ENCODE measurements at regions of chr3 and their contacts with region 1.

Region 1: DNA sequence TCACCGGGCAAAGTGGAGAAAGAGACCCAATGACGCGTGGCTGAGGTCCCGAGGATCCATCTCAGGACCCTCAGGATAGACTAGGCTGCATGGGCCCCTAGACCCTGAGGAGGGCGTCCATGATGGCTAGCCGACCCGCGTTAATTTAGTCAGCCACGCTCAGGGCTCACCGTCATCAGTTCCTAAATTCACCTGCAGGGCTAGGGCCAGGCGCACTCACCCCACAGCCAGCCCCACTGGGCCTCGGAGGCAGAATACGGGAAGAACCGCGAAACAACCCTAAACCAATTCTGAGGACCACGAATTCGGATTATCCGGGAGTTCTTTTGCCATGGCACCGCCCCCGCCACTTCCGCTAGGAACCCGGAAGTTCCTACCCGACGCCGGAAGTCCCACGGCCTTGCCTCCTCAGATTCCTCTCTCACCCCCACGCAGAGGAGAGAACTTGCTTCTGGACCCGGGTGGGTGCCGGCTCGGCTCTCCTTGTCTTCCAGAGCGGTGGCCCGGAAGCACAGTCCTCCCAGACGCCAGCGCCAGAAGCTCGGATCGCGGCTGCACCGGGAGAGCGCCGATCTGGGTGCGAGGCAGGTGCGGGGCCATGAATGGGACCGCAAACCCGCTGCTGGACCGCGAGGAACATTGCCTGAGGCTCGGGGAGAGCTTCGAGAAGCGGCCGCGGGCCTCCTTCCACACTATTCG is at the starts of genes EAF1 and METTL6:
- DNase-seq: peak; percentile 64 to 90 (median 86)
- ATAC-seq: peak; percentile 82
- H3K4me3 ChIP-seq: peak within 1 kb of the TSS; percentile 87 to 96
- H3K4me3 Mint-ChIP-seq: peak within 1 kb of the TSS; percentile 99
- H3K27ac ChIP-seq: peak within 1 kb of the TSS; percentile 81
- H3K27ac Mint-ChIP-seq: peak within 1 kb of the TSS; percentile 98
- H3K4me1 ChIP-seq: peaks cover 43% of the 10 kb centered on the region
- H3K4me1 Mint-ChIP-seq: peaks cover 66% of the 10 kb centered on the region
- H3K27me3 ChIP-seq: no peaks in the 10 kb centered on the region
- H3K27me3 Mint-ChIP-seq: no peaks in the 10 kb centered on the region
- CTCF ChIP-seq: peak; percentile 24
- total RNA-seq, gene EAF1: 33.7 to 36.0 TPM
- total RNA-seq, gene METTL6: 4.1 to 4.9 TPM

Region 2: GRCh38 chr3:14124615-14125190 is 1302.6 kb before region 1 on chr3 and contains the starts of genes CHCHD4 and TMEM43:
- CTCF ChIA-PET with region 1: no interaction called
- POLR2A ChIA-PET with region 1: no interaction called
- intact Hi-C with region 1: loop called in 1 of 2 experiments (anchors 10 kb)
- DNase-seq: peak; percentile 95 to 100 (median 98)
- ATAC-seq: peak; percentile 87
- H3K4me3 ChIP-seq: peak within 1 kb of the TSS; percentile 95 to 100
- H3K4me3 Mint-ChIP-seq: peak within 1 kb of the TSS; percentile 96
- H3K27ac ChIP-seq: peak within 1 kb of the TSS; percentile 89 to 92
- H3K27ac Mint-ChIP-seq: peak within 1 kb of the TSS; percentile 93
- H3K4me1 ChIP-seq: peaks cover 30% of the 10 kb centered on the region
- H3K4me1 Mint-ChIP-seq: peaks cover 56% of the 10 kb centered on the region
- H3K27me3 ChIP-seq: no peaks in the 10 kb centered on the region
- H3K27me3 Mint-ChIP-seq: no peaks in the 10 kb centered on the region
- CTCF ChIP-seq: no peak
- total RNA-seq, gene CHCHD4: 0.71 to 1.7 TPM
- total RNA-seq, gene TMEM43: 20.1 to 24.3 TPM

Region 3: GRCh38 chr3:15098503-15099363 is 328.6 kb before region 1 on chr3 and contains the start of gene RBSN:
- CTCF ChIA-PET with region 1: no interaction called
- POLR2A ChIA-PET with region 1: no interaction called
- intact Hi-C with region 1: loop called in 1 of 2 experiments (anchors 5 kb)
- DNase-seq: peak; percentile 87 to 98 (median 94)
- ATAC-seq: peak; percentile 76
- H3K4me3 ChIP-seq: peak within 1 kb of the TSS; percentile 71 to 76
- H3K4me3 Mint-ChIP-seq: peak within 1 kb of the TSS; percentile 88
- H3K27ac ChIP-seq: peak within 1 kb of the TSS; percentile 96 to 98
- H3K27ac Mint-ChIP-seq: peak within 1 kb of the TSS; percentile 95
- H3K4me1 ChIP-seq: peaks cover 16% of the 10 kb centered on the region
- H3K4me1 Mint-ChIP-seq: peaks cover 31% of the 10 kb centered on the region
- H3K27me3 ChIP-seq: no peaks in the 10 kb centered on the region
- H3K27me3 Mint-ChIP-seq: no peaks in the 10 kb centered on the region
- CTCF ChIP-seq: no peak
- total RNA-seq, gene RBSN: 41.9 to 48.1 TPM

Region 4: DNA sequence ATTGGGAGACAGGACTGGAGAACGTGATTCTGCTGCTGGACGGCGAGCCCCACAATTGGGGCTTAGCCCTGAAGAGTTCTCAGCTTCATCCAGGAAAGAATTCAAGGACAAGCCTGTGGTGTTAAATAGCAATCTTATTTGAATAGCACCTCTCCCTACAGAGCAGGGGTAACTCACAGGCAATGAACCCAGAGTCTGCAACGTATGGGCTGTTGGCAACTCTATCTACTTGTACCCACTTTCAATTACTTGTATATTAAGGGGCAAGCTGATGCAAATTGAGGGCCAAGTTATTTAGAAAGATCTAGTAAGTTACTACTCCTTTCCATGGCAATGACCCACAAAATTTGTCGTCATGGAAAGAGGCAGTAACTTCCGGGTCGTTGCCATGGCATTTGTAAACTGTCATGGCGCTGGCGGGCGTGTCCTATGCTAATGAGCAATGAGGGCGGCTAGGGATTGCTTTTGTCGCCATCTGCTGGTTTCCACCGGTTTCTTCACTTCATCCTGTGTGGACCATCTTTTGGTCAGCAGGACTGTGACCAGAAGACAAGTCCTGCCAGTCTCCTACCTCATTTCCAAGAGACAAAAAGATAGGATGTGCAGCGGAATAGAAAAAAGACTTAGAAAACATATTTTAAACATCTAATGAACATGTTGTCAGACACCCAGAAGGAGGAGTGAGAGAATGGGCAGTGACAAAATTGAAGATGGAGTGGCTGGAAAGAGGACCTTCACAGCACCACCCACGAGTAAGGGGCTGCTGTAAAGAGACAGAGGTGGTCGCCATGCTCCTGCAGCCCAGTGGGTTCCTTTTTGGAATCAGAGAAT is 49.2 kb before region 1 on chr3:
- CTCF ChIA-PET with region 1: no interaction called
- POLR2A ChIA-PET with region 1: no interaction called
- intact Hi-C with region 1: loop called (anchors 1 to 2 kb)
- DNase-seq: peak; percentile 88 to 97 (median 93)
- ATAC-seq: peak; percentile 97
- H3K4me3 ChIP-seq: no peak overlapping the region
- H3K4me3 Mint-ChIP-seq: no peak overlapping the region
- H3K27ac ChIP-seq: peak overlapping the region; percentile 55 to 90
- H3K27ac Mint-ChIP-seq: peak overlapping the region; percentile 89
- H3K4me1 ChIP-seq: peaks cover 5% of the 10 kb centered on the region
- H3K4me1 Mint-ChIP-seq: peaks cover 8% of the 10 kb centered on the region
- H3K27me3 ChIP-seq: no peaks in the 10 kb centered on the region
- H3K27me3 Mint-ChIP-seq: no peaks in the 10 kb centered on the region
- CTCF ChIP-seq: peak; percentile 85

Region 5: DNA sequence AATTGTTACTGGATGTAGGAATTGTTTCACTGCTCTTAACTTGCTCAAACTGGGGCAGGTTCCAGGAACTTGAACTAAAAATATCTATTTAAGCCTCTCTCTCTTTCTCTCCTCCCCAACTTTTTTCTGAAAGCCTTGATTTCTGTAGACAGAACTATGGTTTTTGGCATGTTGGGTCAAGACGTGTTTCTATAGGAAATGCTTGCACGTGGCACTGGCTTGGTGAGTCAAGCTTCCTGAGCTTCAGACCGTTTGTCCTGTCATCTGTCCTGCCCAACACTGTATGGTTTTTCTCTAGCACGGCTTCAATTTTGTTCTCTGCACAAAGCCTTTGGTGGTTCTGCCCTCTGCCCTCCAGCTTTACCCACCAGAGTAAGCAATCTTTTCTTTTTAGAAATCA is 13.6 kb after region 1 on chr3:
- CTCF ChIA-PET with region 1: no interaction called
- POLR2A ChIA-PET with region 1: no interaction called
- intact Hi-C with region 1: no loop called
- DNase-seq: no peak
- ATAC-seq: no peak
- H3K4me3 ChIP-seq: no peak overlapping the region
- H3K4me3 Mint-ChIP-seq: no peak overlapping the region
- H3K27ac ChIP-seq: no peak overlapping the region
- H3K27ac Mint-ChIP-seq: peak overlapping the region; percentile 32
- H3K4me1 ChIP-seq: no peaks in the 10 kb centered on the region
- H3K4me1 Mint-ChIP-seq: peaks cover 9% of the 10 kb centered on the region
- H3K27me3 ChIP-seq: no peaks in the 10 kb centered on the region
- H3K27me3 Mint-ChIP-seq: no peaks in the 10 kb centered on the region
- CTCF ChIP-seq: no peak

Region 6: GRCh38 chr3:15557511-15557946 is 130.2 kb after region 1 on chr3:
- CTCF ChIA-PET with region 1: interaction called, 5 read pairs
- POLR2A ChIA-PET with region 1: no interaction called
- intact Hi-C with region 1: loop called (anchors 1 kb)
- DNase-seq: peak in 7 of 9 experiments; percentile 8 to 80 (median 43)
- ATAC-seq: peak; percentile 99
- H3K4me3 ChIP-seq: no peak overlapping the region
- H3K4me3 Mint-ChIP-seq: no peak overlapping the region
- H3K27ac ChIP-seq: no peak overlapping the region
- H3K27ac Mint-ChIP-seq: no peak overlapping the region
- H3K4me1 ChIP-seq: peaks cover 3% of the 10 kb centered on the region
- H3K4me1 Mint-ChIP-seq: peaks cover 16% of the 10 kb centered on the region
- H3K27me3 ChIP-seq: no peaks in the 10 kb centered on the region
- H3K27me3 Mint-ChIP-seq: no peaks in the 10 kb centered on the region
- CTCF ChIP-seq: peak; percentile 76

Region 7: GRCh38 chr3:15595955-15596354 is 168.6 kb after region 1 on chr3:
- CTCF ChIA-PET with region 1: no interaction called
- POLR2A ChIA-PET with region 1: no interaction called
- intact Hi-C with region 1: loop called (anchors 1 to 5 kb)
- DNase-seq: no peak
- ATAC-seq: no peak
- H3K4me3 ChIP-seq: no peak overlapping the region
- H3K4me3 Mint-ChIP-seq: no peak overlapping the region
- H3K27ac ChIP-seq: no peak overlapping the region
- H3K27ac Mint-ChIP-seq: no peak overlapping the region
- H3K4me1 ChIP-seq: peaks cover 13% of the 10 kb centered on the region
- H3K4me1 Mint-ChIP-seq: peaks cover 32% of the 10 kb centered on the region
- H3K27me3 ChIP-seq: no peaks in the 10 kb centered on the region
- H3K27me3 Mint-ChIP-seq: no peaks in the 10 kb centered on the region
- CTCF ChIP-seq: no peak

Region 8: DNA sequence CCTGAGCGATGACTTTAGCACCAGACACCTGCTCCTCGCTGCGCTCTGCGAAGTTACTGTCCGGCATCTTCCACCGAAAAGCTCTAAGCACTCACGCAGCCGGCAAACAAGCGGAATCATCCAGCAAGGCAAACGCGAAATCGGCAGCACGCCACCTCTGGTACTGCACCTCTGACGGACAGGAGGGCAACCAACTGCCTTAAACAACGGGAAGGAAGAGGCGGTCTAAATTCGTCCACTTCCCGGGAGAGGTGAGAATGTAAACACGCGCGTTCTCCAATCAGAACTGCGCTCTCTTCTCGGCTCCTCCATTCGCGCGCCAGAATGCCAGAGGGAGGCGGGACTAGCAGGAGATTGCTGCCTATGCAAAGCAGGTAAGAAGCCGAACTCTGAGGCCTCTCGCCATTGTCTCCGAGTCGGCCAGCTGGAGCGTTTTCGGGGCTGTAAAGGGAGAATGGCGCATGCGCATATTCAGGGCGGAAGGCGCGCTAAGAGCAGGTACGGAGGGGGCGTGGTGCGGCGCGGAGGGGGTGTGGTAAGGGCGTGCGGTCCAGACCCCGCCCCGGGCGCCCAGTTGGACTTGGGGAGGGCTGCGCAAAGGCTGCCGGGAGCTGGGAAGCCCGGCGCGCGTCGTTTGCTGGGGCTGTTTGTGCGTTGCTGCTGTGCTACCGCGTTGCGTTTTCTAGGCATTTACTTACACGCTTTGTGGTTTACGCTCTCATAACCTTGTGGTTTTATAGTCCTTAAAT is 174.2 kb after region 1 on chr3 and contains the starts of genes BTD and HACL1:
- CTCF ChIA-PET with region 1: no interaction called
- POLR2A ChIA-PET with region 1: no interaction called
- intact Hi-C with region 1: loop called (anchors 1 to 5 kb)
- DNase-seq: peak; percentile 96 to 100 (median 99)
- ATAC-seq: peak; percentile 89
- H3K4me3 ChIP-seq: peak within 1 kb of the TSS; percentile 82 to 94
- H3K4me3 Mint-ChIP-seq: peak within 1 kb of the TSS; percentile 100
- H3K27ac ChIP-seq: peak within 1 kb of the TSS; percentile 82 to 88
- H3K27ac Mint-ChIP-seq: peak within 1 kb of the TSS; percentile 99
- H3K4me1 ChIP-seq: peaks cover 19% of the 10 kb centered on the region
- H3K4me1 Mint-ChIP-seq: peaks cover 54% of the 10 kb centered on the region
- H3K27me3 ChIP-seq: no peaks in the 10 kb centered on the region
- H3K27me3 Mint-ChIP-seq: no peaks in the 10 kb centered on the region
- CTCF ChIP-seq: peak; percentile 24
- total RNA-seq, gene BTD: 9.1 to 11.3 TPM
- total RNA-seq, gene HACL1: 30.1 to 33.4 TPM